CD4-positive, alpha-beta memory T cell (primary cell): ENCODE measurements at regions of chr17 and their contacts with region 1.

Region 1: GRCh38 chr17:2685696-2686095 is 25.9 kb downstream of the CLUH start:
- DNase-seq: no peak
- H3K4me3 ChIP-seq: no peak overlapping the region
- H3K4me3 Mint-ChIP-seq: no peak overlapping the region
- H3K27ac ChIP-seq: no peak overlapping the region
- H3K27ac Mint-ChIP-seq: peak overlapping the region in 1 of 7 donors; percentile 40
- H3K4me1 ChIP-seq: peaks cover 14% of the 10 kb centered on the region
- H3K4me1 Mint-ChIP-seq: peaks cover 6 to 21% (median 11%) of the 10 kb centered on the region in 4 donors
- H3K27me3 ChIP-seq: no peaks in the 10 kb centered on the region
- H3K27me3 Mint-ChIP-seq: no peaks in the 10 kb centered on the region

Region 2: DNA sequence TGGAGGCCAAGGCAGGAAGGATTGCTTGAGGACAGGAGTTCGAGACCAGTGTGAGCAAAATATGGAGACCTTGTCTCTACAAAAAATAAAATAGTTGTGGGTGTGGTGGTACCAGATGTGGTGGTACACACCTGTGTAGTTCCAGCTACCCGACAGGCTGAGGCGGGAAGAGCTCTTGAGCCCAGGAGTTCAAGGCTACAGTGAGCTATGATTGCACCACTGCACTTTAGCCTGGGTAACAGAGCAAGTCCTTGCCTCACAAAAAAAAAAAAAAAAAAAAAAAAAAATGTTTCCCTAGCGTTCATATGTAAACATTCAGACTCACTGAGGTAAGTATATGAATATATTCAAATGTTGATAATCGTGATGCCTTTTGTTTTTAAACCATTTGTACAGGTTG is 13.7 kb before region 1 on chr17:
- CTCF ChIA-PET with region 1: interaction called, 14 read pairs
- POLR2A ChIA-PET with region 1: no interaction called
- intact Hi-C with region 1: no loop called
- DNase-seq: no peak
- H3K4me3 ChIP-seq: no peak overlapping the region
- H3K4me3 Mint-ChIP-seq: no peak overlapping the region
- H3K27ac ChIP-seq: no peak overlapping the region
- H3K27ac Mint-ChIP-seq: peak overlapping the region in 1 of 7 donors; percentile 48
- H3K4me1 ChIP-seq: peaks cover 3% of the 10 kb centered on the region
- H3K4me1 Mint-ChIP-seq: peaks cover 3 to 6% (median 4%) of the 10 kb centered on the region in 4 donors
- H3K27me3 ChIP-seq: no peaks in the 10 kb centered on the region
- H3K27me3 Mint-ChIP-seq: no peaks in the 10 kb centered on the region

Region 3: GRCh38 chr17:2700516-2701141 is 14.9 kb after region 1 on chr17:
- CTCF ChIA-PET with region 1: no interaction called
- POLR2A ChIA-PET with region 1: no interaction called
- intact Hi-C with region 1: no loop called
- DNase-seq: no peak
- H3K4me3 ChIP-seq: no peak overlapping the region
- H3K4me3 Mint-ChIP-seq: no peak overlapping the region
- H3K27ac ChIP-seq: no peak overlapping the region
- H3K27ac Mint-ChIP-seq: no peak overlapping the region
- H3K4me1 ChIP-seq: no peaks in the 10 kb centered on the region
- H3K4me1 Mint-ChIP-seq: peaks cover 3 to 8% (median 4%) of the 10 kb centered on the region in 4 donors
- H3K27me3 ChIP-seq: no peaks in the 10 kb centered on the region
- H3K27me3 Mint-ChIP-seq: no peaks in the 10 kb centered on the region

Region 4: GRCh38 chr17:2828397-2829038 is 142.8 kb after region 1 on chr17:
- CTCF ChIA-PET with region 1: no interaction called
- POLR2A ChIA-PET with region 1: no interaction called
- intact Hi-C with region 1: no loop called
- DNase-seq: peak; percentile 67 to 76 (median 71)
- H3K4me3 ChIP-seq: no peak overlapping the region
- H3K4me3 Mint-ChIP-seq: peak overlapping the region in 7 of 8 donors; percentile 42 to 70 (median 57)
- H3K27ac ChIP-seq: no peak overlapping the region
- H3K27ac Mint-ChIP-seq: peak overlapping the region in 5 of 7 donors; percentile 5 to 93 (median 67)
- H3K4me1 ChIP-seq: peaks cover 24% of the 10 kb centered on the region
- H3K4me1 Mint-ChIP-seq: peaks cover 20 to 40% (median 22%) of the 10 kb centered on the region in 4 donors
- H3K27me3 ChIP-seq: no peaks in the 10 kb centered on the region
- H3K27me3 Mint-ChIP-seq: peaks cover 0 to 1% of the 10 kb centered on the region in 2 donors